ENCODE measurements at regions of chr15 and their contacts with region 1.

Region 1: DNA sequence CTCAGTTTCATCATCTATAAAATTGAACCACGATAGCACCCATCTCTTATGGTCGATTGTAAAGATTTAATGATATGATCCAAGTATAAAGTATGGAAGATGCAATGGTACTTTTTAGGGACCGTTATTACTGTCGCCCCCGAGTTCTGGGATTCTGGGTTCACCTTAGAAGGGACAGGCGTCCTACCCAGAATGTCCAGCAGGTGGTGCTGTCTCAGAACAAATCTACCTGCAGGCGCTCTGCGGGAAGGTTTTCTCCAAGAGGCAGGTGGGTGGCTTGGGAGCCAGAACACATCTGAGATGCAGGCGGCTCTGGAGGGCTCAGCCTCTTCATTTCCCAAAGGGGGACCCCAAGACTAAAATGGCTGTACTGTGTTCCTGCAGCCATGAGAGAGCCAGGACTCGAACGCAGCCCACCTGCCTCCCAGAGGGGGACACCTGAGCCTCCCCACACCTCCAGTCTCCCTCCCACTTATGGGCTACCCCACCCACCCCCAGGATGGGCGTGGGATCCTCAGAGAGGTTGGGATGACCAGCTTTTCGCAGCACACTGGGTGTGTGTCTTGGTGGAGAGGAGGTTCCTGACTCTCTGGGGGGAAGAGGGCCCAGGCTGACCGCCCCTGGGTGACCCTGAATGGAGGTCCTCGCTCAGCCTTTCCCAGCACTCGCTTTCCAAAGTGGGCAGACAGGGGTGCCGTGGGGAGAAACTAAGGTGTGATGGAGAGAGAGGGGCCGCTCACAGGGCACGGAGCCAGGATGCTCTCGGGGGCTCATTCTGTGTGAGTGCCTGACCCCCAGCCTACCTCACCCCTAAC is 28.1 kb upstream of the CORO2B start:
- DNase-seq: peak; percentile 38
- ATAC-seq: peak; percentile 59; the same call in 1 of the 2 replicates
- H3K4me3 ChIP-seq: no peak overlapping the region
- H3K27ac ChIP-seq: no peak overlapping the region
- H3K4me1 ChIP-seq: no peaks in the 10 kb centered on the region; the same call in 1 of the 2 replicates
- H3K27me3 ChIP-seq: no peaks in the 10 kb centered on the region
- CTCF ChIP-seq: peak; percentile 94

Region 2: GRCh38 chr15:68492855-68493254 is 57.8 kb before region 1 on chr15:
- CTCF ChIA-PET with region 1: no interaction called
- POLR2A ChIA-PET with region 1: no interaction called
- in situ Hi-C with region 1: no loop called
- intact Hi-C with region 1: no loop called
- DNase-seq: no peak
- ATAC-seq: no peak
- H3K4me3 ChIP-seq: no peak overlapping the region
- H3K27ac ChIP-seq: no peak overlapping the region
- H3K4me1 ChIP-seq: no peaks in the 10 kb centered on the region
- H3K27me3 ChIP-seq: peaks cover 23% of the 10 kb centered on the region
- CTCF ChIP-seq: no peak

Region 3: GRCh38 chr15:68924866-68925560 is 374.3 kb after region 1 on chr15:
- CTCF ChIA-PET with region 1: interaction called, 6 read pairs
- POLR2A ChIA-PET with region 1: no interaction called
- in situ Hi-C with region 1: no loop called
- intact Hi-C with region 1: loop called (anchors 2 kb)
- DNase-seq: peak; percentile 30
- ATAC-seq: peak; percentile 98
- H3K4me3 ChIP-seq: no peak overlapping the region
- H3K27ac ChIP-seq: no peak overlapping the region
- H3K4me1 ChIP-seq: no peaks in the 10 kb centered on the region
- H3K27me3 ChIP-seq: peaks cover 10% of the 10 kb centered on the region
- CTCF ChIP-seq: peak; percentile 90

Measured in Panc1 (cell line).